ENCODE measurements at regions of chr5 and their contacts with region 1.

Region 1: DNA sequence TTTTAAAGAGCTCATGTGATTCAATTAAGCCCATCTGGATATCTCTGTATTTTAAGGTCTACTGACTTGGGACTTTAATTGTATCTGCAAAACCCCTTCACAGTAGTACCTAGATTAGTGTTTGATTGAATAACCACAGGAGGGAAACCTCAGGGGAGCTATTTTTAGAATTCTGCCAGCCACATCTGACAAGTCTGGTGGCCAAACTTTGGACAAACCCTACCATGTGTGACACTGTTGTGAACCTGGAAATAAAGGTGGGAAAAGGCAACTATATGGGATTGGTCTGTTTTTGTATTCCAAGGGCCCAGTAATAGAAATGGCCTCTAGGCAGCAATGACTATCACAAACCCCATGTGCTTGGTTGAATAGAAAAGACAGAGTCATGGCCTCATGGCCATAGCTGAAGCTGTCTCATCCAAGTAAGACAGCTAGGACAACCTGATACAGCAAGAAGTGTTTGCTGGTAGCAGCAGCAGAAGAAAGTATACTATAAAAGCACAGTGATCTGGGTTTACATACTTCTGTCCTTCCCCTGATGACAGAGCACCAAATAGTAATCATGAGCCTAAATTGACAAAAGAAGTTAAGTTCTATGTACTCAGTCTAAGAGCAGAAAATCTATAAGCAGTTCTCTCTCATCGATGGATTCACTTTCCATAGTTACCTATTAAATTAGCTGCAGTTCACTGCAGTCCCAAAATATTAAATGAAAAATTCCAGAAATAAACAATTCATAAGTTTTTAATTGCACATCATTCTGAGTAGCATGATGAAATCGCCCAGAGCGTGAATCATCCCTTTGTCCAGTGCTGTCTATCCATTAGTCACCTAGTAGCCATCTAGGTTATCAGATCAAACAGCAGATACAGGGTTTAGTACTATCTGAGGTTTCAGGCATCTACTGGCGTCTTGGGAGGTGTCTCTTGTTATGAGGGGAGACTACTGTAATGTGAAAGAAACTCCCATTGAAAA is 189.8 kb downstream of the ARHGAP26 start:
- DNase-seq: no peak
- H3K4me3 Mint-ChIP-seq: no peak overlapping the region
- H3K27ac Mint-ChIP-seq: peak overlapping the region; percentile 30
- H3K4me1 Mint-ChIP-seq: peaks cover 48% of the 10 kb centered on the region
- H3K27me3 Mint-ChIP-seq: no peaks in the 10 kb centered on the region
- CTCF ChIP-seq: no peak

Region 2: DNA sequence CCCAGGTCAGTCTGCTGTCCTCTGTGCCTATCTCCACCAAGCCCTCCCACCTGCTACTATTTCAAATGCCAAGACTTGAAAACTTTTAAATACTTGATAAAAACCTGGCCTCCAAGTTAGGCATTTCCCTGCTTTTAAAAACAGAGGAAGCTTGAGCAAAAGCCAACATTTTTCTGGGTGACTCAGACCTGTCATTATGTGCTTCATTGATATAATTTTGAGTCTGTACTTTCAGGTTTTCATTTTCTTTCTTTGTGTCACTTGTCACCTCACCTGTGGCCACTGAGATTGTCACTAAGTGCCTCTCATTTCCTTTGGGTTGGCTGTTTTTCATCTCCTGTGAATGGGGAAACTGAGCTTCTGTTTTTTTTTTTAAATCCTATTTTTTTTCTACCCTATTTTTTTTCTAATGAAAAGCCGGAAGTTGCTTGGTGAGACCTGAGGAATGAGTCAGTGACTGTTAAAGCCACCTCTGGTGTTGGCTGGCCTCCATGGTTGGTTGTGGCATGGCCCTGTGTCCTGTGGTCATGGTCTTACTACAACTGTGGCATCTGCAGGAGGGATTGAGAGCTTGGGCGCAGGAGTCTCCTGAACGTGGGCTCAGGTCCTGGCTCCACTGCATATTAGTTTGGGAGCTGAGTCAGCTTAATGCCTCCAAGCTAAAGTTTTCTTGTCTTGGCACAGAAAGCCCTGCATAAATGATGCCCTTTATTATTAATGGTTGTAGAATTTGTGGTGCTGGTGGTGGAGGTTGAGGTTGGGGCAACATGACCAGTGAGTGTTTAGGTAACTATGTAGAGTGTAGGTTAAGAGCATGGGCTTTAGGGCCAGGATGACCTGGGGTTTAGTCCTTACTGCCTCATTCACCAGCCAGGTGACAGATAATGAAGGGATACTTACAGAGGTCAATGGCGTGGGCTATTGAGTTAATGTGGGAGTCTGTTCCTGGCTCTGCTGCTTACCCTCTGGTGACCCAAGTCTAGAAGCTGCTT is 132.9 kb before region 1 on chr5:
- CTCF ChIA-PET with region 1: no interaction called
- intact Hi-C with region 1: loop called (anchors 5 kb)
- DNase-seq: peak; percentile 79
- H3K4me3 Mint-ChIP-seq: peak overlapping the region; percentile 69
- H3K27ac Mint-ChIP-seq: peak overlapping the region; percentile 87
- H3K4me1 Mint-ChIP-seq: peaks cover 95% of the 10 kb centered on the region
- H3K27me3 Mint-ChIP-seq: no peaks in the 10 kb centered on the region
- CTCF ChIP-seq: no peak

Region 3: DNA sequence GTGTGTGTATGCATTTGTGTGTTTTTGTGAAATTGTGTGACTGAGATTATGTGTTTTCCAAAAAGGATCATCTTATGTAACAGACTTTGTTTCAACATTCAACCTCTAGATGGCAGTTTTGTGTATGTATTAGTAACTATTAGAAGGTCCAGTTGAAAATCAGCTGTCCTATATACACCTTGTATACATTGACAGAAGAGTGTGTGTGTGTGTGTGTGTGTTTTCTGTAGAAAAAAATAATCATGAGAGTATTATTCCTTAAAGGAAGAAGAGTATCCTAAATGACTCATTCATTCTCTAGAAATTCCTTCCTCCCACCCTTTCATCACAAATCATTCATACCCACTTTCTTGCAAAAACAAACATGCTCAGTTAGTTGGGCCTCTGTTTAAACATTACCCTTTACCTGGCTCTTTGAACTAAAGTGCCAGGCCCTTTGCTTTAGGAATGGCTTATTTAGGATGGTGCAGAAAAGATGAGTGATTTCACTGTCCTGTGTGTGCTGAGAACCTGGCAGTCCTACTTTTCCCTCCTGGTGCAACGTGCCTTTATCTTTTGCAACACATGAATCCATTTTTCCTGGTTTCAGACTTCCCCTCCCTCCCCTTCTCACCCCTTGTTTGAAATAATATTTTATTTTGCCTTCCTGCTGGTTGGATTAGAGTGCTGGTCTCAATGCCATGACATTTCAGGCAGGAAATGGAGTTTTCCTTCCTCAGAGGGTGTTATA is 37.6 kb before region 1 on chr5:
- CTCF ChIA-PET with region 1: interaction called, 5 read pairs
- intact Hi-C with region 1: loop called (anchors 2 kb)
- DNase-seq: no peak
- H3K4me3 Mint-ChIP-seq: no peak overlapping the region
- H3K27ac Mint-ChIP-seq: no peak overlapping the region
- H3K4me1 Mint-ChIP-seq: peaks cover 63% of the 10 kb centered on the region
- H3K27me3 Mint-ChIP-seq: no peaks in the 10 kb centered on the region
- CTCF ChIP-seq: peak; percentile 1